Left ventricle myocardium superior (tissue), 1 donor: ENCODE measurements at regions of chr11 and their contacts with region 1.

Region 1: DNA sequence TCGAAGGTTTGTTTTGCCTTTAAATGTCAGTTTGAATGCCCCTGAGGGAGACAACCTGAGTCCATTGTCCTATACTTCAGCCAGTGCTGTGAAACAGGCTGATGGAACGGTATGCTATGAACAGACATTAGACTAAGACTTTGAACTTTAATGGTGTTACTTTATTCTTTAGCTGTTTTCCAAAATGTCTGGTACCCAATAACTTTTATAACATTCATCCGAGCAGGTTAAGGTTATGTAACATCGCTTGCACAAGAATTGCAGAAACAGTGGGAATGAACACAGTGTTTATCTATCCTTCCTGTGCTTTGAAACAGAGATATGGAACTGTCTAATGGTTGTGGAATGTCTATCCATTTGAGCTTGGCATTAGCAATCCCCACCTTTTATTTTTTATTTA is 12.5 kb upstream of the PTS start:
- DNase-seq: no peak
- ATAC-seq: no peak

Region 2: GRCh38 chr11:112374486-112375140 is 160.9 kb after region 1 on chr11:
- intact Hi-C with region 1: loop called (anchors 5 kb)
- DNase-seq: no peak
- ATAC-seq: peak; percentile 33